Posterior cingulate gyrus (tissue), 11 donors: ENCODE measurements at regions of chr12 and their contacts with region 1.

Region 1: GRCh38 chr12:12562585-12563261 is at the start of gene DUSP16:
- DNase-seq: peak; percentile 81 to 98 (median 86)

Region 2: GRCh38 chr12:11862798-11863197 is 699.9 kb before region 1 on chr12:
- intact Hi-C with region 1: no loop called
- DNase-seq: no peak

Region 3: DNA sequence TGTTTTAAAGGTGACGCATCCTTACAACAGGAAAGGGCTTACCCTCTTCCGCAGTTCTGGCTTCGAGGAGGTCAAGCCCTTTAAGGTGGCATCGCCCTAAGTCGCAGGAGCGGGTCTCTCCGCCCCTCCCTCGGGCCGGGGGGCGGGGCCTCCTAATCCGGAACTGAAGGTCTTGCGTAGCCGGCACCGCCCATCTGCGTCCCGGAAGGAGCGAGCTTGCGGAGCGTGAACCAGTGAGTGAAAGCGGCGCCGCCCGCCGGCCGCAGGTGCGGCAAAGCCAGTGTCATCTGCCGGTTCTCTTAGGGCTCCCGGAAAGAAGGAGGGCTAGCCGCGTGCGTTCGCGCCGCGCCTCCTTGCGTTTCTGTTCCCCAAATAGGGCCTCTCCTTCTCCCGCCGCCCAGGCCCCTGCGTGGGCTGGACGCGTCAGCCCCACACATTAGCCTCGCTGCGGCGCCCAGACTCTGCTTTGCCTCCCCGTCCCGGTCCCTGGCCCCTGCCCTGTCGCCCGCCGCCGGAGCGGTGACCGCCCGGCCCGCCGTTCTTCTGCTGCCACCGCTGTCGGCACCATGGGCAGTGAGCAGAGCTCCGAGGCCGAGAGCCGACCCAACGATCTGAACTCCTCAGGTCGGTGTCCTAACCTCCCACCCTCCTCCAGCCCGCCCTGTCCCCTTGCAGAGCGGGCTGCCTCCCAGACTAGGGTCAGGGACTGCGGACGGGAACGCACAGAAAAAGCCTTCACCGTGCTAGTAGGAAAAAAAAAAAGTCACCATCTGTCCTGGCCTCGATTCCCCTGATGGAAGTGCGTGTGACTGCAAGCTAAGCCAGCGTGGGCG is 205.6 kb before region 1 on chr12 and contains the start of gene BORCS5:
- intact Hi-C with region 1: loop called (anchors 5 kb)
- DNase-seq: peak; percentile 95 to 100 (median 98)

Region 4: DNA sequence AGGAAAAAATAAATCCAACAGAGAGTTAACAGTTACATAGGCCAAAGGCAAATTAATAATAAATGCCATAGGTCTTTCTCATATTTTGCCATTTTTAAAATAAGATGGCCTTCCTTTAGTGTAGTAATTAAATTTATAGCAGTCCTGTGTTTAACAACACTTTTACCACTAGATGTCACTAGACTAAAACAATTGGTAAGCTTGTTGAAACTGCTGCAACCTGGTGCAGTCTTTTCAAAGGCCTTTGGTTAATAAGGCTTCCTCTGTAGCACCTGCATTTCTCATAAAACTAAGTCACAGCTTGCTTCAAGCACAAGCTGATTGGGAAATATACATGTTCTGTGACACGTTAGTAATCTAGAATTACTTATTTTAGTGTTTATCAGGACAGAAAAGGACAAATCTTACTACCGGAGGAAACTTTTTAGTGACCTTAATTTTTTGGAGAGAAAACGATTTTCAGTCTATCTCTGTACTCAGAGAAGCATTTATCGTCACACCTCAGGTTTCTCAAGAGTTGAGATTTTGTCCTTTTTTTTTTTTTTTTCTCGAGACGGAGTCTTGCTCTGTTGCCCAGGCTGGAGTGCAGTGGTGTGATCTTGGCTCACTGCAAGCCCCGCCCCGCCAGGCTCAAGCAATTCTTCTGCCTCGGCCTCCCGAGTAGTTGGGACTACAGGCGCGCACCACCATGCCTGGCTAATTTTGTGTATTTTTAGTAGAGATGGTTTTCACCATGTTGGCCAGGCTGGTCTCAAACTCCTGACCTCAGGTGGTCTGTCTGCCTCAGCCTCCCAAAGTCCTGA is 185.9 kb before region 1 on chr12:
- intact Hi-C with region 1: loop called (anchors 2 kb)
- DNase-seq: peak in 1 of 10 donors; percentile 74

Region 5: DNA sequence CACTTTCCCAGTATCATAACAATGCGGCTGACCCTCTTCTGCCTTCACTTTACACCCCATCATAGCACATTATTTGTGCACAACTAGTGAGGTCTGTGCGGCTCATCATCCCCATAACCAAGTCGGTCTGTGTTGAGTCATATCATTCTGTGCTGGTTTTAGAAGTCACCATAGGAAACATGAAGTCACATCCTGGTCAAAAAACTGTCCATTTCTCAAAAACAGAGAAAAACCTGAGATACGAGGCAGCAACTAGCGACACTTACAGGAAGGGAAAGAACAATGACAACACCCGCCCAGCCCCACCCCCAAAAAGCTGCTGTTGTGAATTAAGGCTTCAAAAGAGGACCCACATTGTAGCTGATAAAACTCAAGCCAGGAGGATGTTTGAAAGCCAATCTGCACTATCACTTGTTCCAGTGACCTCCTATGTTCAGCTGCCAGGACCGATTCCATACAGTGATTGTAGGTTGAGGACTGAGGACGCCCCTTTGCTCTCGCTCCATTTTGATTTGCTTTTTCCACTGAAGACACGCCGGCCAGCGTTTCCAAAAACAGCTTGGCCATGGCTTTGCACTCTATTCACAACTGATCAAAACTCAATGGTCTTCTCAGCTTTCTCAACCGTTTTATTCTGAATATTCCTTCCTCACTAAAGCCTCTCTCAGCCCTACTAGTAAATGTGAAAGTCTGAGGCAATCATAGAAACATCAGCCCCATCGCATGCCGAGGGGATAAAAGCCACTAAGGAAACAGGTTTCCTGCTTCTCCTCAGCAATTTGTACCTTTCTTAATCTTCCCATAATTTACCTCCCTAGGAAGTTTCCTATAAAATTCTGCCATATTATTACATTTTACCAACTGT is 87.6 kb before region 1 on chr12:
- intact Hi-C with region 1: loop called (anchors 5 kb)
- DNase-seq: no peak

Region 6: DNA sequence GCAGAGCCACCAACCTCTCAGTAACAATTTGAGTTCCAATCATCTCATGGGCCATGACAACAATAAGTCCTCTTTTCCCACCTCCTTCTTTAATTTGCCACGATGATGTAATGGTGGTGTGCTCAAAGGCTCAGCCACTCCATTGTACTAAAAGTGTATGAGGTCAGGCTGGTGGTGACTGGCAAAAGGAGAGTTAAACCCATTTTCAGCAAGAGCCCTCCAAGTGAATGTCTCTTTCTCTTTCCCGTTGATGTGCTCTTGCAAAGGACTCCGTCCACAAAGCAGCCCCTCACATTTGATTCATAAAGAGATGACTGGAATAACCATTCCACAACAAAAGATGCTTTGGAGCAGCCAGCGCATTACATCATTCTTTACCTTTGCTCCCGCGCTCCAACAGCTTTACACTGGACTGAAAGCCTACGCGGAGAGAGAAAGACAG is 41.7 kb before region 1 on chr12:
- intact Hi-C with region 1: loop called (anchors 5 kb)
- DNase-seq: peak in 1 of 10 donors; percentile 19

Region 7: DNA sequence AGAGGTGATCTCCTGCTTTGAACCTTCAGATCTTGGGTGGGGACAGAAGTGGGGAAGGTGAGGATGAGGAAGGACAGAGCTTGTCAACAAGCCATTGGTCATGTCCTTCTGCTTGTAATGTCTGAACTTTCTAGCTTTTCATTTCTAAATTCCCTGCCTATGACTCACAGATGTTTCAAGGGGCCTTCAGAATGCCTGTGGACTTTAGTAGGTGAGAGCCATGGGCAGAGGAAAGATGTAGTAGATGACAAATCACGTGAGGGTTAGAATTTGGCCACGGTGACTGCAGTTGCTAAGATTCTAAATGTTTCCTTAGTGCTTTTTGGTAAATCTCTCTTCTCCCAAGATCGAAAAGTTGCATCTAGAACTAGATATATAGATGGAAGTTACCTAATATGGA is 30.2 kb after region 1 on chr12:
- intact Hi-C with region 1: no loop called
- DNase-seq: no peak

Region 8: GRCh38 chr12:12611512-12612306 is 49.0 kb after region 1 on chr12 and contains the start of gene CREBL2:
- intact Hi-C with region 1: loop called (anchors 2 kb)
- DNase-seq: peak; percentile 84 to 98 (median 91)

Region 9: DNA sequence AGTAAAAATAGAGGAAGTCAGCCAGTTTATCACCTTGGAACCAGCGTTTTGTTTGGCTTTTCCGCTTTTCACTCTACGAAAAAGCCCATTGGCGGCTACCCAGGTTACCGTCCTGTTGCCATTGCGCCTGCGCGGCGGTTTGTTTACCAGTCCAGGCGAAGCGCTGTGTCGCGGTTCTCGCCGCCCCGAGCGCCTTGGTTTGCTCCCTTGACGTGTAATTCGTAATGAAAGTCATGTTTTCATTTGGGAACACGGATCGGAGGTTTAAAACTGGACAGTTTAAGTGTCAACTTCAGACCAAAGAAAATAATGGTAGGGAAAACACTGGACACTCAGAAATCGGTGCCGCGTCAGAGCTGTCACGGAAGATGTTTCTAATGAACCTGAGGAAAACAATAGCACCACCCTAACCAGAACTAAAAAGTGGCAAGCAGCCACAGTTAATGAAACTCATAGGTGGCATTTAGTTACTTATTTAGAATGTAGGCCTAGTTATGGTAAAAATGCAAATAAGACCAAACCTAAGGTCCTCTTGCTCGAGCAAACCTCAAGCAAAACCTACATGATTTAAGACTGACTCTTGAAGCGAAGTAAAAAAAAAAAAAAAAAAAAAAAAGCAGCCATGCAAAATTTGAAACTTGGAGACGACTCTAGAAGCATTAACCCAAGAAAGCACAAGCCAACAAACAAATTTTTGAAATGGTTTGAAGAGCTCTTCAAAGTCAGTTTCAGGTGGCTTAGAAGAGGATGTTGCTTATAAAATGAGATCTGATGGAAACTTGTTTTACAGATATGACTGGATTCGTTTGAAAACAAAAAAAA is 134.1 kb after region 1 on chr12:
- intact Hi-C with region 1: loop called (anchors 5 kb)
- DNase-seq: peak; percentile 83 to 98 (median 90)